ENCODE measurements at regions of chr6 and their contacts with region 1.

Region 1: DNA sequence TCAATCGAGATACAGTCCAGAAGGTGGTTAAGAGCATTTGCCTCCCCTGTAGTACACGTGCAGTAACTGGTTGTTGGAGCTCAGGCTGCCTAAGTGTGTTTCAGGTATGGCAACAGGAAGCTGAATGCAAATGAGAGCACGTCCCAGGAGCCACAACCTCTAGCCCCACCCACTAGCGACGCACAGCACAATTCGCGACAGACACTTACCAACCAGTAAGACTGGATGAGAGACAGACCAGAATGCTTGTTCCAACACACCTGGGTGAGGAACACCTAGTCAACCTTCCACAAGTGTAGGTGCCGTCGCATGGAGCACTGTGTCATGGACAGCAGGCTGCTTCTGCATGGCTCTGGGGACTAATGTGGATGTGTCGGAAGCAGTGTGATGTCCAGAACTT is 7.2 kb upstream of the SERPINB1 start:
- DNase-seq: peak in 7 of 9 donors; percentile 62 to 84 (median 75)
- ATAC-seq: peak; percentile 82
- H3K4me3 ChIP-seq: no peak overlapping the region
- H3K4me3 Mint-ChIP-seq: peak overlapping the region; percentile 30 to 83 (median 66)
- H3K27ac ChIP-seq: peak overlapping the region; percentile 63
- H3K27ac Mint-ChIP-seq: peak overlapping the region; percentile 85 to 95 (median 91)
- H3K4me1 ChIP-seq: peaks cover 16 to 30% of the 10 kb centered on the region in 2 donors
- H3K4me1 Mint-ChIP-seq: peaks cover 25 to 49% (median 48%) of the 10 kb centered on the region in 7 donors
- H3K27me3 ChIP-seq: no peaks in the 10 kb centered on the region
- H3K27me3 Mint-ChIP-seq: no peaks in the 10 kb centered on the region

Region 2: DNA sequence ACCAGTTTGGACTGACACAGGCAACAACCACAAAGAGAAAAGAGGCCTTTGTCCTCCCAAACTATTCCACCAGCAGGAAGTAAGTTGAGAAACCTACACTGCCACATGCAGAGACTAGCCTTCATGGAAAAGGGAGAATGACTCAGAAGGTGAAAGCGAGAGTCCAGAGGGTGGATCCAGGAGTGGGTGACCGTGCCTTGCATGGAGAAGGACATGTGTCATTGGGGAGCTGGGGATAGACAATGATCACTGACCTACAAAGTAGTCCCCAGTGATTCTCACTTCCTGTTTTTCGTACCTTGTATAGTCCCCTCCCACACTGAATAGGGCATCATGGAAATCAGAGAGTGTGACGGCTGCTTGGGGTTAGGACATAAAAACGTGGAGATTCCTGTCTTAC is 190.1 kb before region 1 on chr6:
- CTCF ChIA-PET with region 1: no interaction called
- POLR2A ChIA-PET with region 1: no interaction called
- intact Hi-C with region 1: no loop called
- DNase-seq: no peak
- ATAC-seq: peak; percentile 54
- H3K4me3 ChIP-seq: no peak overlapping the region
- H3K4me3 Mint-ChIP-seq: no peak overlapping the region
- H3K27ac ChIP-seq: no peak overlapping the region
- H3K27ac Mint-ChIP-seq: no peak overlapping the region
- H3K4me1 ChIP-seq: no peaks in the 10 kb centered on the region
- H3K4me1 Mint-ChIP-seq: peaks cover 0 to 4% (median 0%) of the 10 kb centered on the region in 7 donors
- H3K27me3 ChIP-seq: no peaks in the 10 kb centered on the region
- H3K27me3 Mint-ChIP-seq: peaks cover 0 to 11% (median 1%) of the 10 kb centered on the region in 5 donors

Region 3: GRCh38 chr6:2859185-2859700 is 10.4 kb after region 1 on chr6:
- CTCF ChIA-PET with region 1: interaction called, 35 read pairs
- POLR2A ChIA-PET with region 1: interaction called, 62 read pairs
- intact Hi-C with region 1: loop called (anchors 1 kb)
- DNase-seq: peak in 5 of 9 donors; percentile 78 to 84 (median 80)
- ATAC-seq: no peak
- H3K4me3 ChIP-seq: peak overlapping the region; percentile 56
- H3K4me3 Mint-ChIP-seq: peak overlapping the region; percentile 79 to 98 (median 88)
- H3K27ac ChIP-seq: peak overlapping the region; percentile 86
- H3K27ac Mint-ChIP-seq: peak overlapping the region; percentile 98 to 100 (median 99)
- H3K4me1 ChIP-seq: peaks cover 81 to 84% of the 10 kb centered on the region in 2 donors
- H3K4me1 Mint-ChIP-seq: peaks cover 66 to 95% (median 89%) of the 10 kb centered on the region in 7 donors
- H3K27me3 ChIP-seq: no peaks in the 10 kb centered on the region
- H3K27me3 Mint-ChIP-seq: no peaks in the 10 kb centered on the region

Region 4: DNA sequence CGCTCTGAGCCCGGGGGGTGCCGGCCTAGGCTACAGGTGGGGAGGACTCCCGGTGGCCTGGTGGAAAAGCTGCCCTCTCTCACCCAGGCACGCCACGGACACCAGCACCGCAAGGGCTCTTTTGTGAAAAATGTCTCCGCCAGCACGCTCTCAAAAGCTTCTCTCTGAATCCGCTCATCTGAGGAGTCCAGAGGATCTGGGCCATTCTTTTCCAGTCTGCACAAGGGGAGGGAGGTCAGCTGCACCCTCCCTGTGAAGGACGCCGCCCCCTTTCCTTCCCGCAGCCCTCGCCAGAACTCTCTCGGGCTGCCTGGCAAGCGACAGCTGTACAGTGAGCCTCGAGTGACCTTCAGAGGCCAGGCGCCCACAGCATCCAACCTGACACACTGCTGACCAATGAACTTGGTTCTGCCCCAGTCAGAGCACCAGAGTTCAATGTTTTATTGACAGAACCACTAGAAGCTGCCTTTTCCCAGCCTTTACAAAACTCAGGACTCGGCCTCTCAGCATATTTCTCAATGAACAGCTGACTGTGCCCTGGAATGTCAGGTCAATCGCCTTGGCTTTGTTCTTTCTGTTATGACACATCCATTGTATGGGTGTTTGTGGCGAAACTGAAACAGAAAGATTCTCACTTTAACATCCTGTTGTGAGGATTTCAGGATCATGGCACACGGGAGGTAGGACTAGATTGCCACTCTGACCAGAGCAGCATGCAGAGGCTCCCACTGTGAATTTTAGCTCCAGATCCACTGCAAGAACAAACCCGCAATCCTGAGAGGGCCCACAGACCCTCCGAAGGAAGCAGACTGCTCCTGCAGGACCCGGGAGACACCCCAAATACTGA is 27.6 kb after region 1 on chr6:
- CTCF ChIA-PET with region 1: interaction called, 57 read pairs
- POLR2A ChIA-PET with region 1: interaction called, 30 read pairs
- intact Hi-C with region 1: loop called (anchors 1 kb)
- DNase-seq: no peak
- ATAC-seq: peak; percentile 38
- H3K4me3 ChIP-seq: peak overlapping the region; percentile 50
- H3K4me3 Mint-ChIP-seq: peak overlapping the region; percentile 79 to 87 (median 84)
- H3K27ac ChIP-seq: peak overlapping the region; percentile 71
- H3K27ac Mint-ChIP-seq: peak overlapping the region; percentile 82 to 98 (median 91)
- H3K4me1 ChIP-seq: peaks cover 54 to 55% of the 10 kb centered on the region in 2 donors
- H3K4me1 Mint-ChIP-seq: peaks cover 63 to 83% (median 79%) of the 10 kb centered on the region in 7 donors
- H3K27me3 ChIP-seq: no peaks in the 10 kb centered on the region
- H3K27me3 Mint-ChIP-seq: no peaks in the 10 kb centered on the region

Region 5: DNA sequence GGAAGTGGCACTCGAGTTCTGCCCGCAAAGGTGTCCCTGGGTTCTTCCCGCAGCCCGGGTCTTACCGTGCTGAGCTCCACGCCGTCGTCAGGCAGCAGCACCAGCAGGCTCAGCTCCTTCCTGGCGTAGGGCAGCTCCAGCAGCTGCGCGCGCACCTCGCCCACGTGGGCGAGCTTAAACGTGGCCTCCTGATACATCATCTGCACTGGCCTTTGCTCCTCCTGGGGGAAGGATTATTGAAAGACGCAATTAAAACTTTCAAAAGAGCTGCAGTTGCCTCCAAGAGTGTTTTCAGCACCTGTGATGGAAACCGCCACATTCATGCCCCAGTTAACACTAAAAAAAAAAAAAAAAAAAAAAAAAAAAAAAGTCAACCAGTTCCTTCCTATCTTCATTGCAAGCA is 42.9 kb after region 1 on chr6:
- CTCF ChIA-PET with region 1: interaction called, 40 read pairs
- POLR2A ChIA-PET with region 1: interaction called, 18 read pairs
- intact Hi-C with region 1: loop called in 1 of 2 experiments (anchors 1 kb)
- DNase-seq: peak in 8 of 9 donors; percentile 31 to 93 (median 79)
- ATAC-seq: peak; percentile 88
- H3K4me3 ChIP-seq: peak overlapping the region; percentile 34
- H3K4me3 Mint-ChIP-seq: peak overlapping the region; percentile 58 to 81 (median 69)
- H3K27ac ChIP-seq: peak overlapping the region; percentile 69
- H3K27ac Mint-ChIP-seq: peak overlapping the region; percentile 13 to 96 (median 90)
- H3K4me1 ChIP-seq: peaks cover 0 to 18% of the 10 kb centered on the region in 2 donors
- H3K4me1 Mint-ChIP-seq: peaks cover 22 to 80% (median 68%) of the 10 kb centered on the region in 7 donors
- H3K27me3 ChIP-seq: no peaks in the 10 kb centered on the region
- H3K27me3 Mint-ChIP-seq: no peaks in the 10 kb centered on the region

Region 6: DNA sequence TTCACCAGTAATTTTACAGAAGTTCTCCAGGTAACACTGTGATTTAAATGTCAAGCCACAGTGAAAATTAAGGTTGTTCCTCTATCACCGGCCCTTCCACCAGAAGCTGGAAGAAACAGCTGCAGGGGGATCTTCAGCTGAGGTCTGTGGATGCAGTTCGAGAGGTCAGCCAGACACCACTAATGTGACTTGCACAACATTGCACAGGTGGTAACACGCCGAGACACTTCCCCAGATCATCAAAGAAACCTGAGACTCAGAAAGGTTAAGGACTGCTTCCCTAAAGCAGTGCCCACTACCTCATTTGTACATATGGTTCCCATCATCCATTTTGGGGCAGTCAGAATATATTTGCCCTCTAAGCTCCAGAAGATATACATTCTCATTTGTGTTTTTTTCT is 62.3 kb after region 1 on chr6:
- CTCF ChIA-PET with region 1: interaction called, 77 read pairs
- POLR2A ChIA-PET with region 1: interaction called, 71 read pairs
- intact Hi-C with region 1: loop called (anchors 1 kb)
- DNase-seq: no peak
- ATAC-seq: peak; percentile 35
- H3K4me3 ChIP-seq: no peak overlapping the region
- H3K4me3 Mint-ChIP-seq: no peak overlapping the region
- H3K27ac ChIP-seq: no peak overlapping the region
- H3K27ac Mint-ChIP-seq: peak overlapping the region in 2 of 9 donors; percentile 40 to 54
- H3K4me1 ChIP-seq: peaks cover 0 to 7% of the 10 kb centered on the region in 2 donors
- H3K4me1 Mint-ChIP-seq: peaks cover 26 to 53% (median 40%) of the 10 kb centered on the region in 7 donors
- H3K27me3 ChIP-seq: no peaks in the 10 kb centered on the region
- H3K27me3 Mint-ChIP-seq: peaks cover 0 to 1% (median 0%) of the 10 kb centered on the region in 5 donors

Region 7: DNA sequence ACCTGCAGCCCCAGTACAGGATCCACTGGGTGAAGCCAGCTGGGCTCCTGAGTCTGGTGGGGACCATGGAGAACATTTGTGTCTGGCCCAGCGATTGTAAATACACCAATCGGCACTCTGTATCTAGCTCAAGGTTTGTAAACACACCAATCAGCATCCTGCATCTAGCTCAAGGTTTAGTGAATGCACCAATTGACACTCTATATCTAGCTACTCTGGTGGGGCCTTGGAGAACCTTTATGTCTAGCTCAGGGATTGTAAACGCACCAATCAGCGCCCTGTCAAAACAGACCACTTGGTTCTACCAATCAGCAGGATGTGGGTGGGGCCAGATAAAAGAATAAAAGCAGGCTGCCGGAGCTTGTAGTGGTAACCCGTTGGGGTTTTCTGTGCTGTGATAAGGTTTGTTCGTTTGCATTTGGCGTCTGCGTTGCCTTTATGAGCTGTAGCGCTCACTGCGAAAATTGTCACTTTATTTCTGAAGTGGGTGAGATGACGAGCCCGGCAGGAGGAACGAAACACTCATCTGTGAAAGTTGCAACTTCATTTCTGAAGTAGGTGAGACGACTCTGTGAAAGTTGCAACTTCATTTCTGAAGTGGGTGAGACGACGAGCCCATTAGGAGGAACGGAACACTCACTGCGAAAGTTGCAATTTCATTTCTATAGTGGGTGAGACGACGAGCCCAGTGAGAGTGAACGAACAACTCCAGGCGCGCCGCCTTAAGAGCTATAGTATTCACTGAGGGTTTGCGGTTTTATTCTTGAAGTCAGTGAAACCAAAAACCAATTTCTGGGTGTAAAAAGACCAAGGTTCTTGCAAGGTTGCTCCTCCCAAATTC is 91.4 kb after region 1 on chr6:
- CTCF ChIA-PET with region 1: interaction called, 35 read pairs
- POLR2A ChIA-PET with region 1: interaction called, 90 read pairs
- intact Hi-C with region 1: loop called in 1 of 2 experiments (anchors 2 kb)
- DNase-seq: peak in 8 of 9 donors; percentile 70 to 90 (median 82)
- ATAC-seq: peak; percentile 81
- H3K4me3 ChIP-seq: peak overlapping the region; percentile 72
- H3K4me3 Mint-ChIP-seq: peak overlapping the region; percentile 81 to 94 (median 88)
- H3K27ac ChIP-seq: peak overlapping the region; percentile 81
- H3K27ac Mint-ChIP-seq: peak overlapping the region; percentile 93 to 100 (median 97)
- H3K4me1 ChIP-seq: peaks cover 27 to 76% of the 10 kb centered on the region in 2 donors
- H3K4me1 Mint-ChIP-seq: peaks cover 33 to 88% (median 79%) of the 10 kb centered on the region in 7 donors
- H3K27me3 ChIP-seq: no peaks in the 10 kb centered on the region
- H3K27me3 Mint-ChIP-seq: peaks cover 0 to 22% (median 0%) of the 10 kb centered on the region in 5 donors

Region 8: GRCh38 chr6:3061501-3061941 is 212.7 kb after region 1 on chr6:
- CTCF ChIA-PET with region 1: interaction called, 3 read pairs
- POLR2A ChIA-PET with region 1: no interaction called
- intact Hi-C with region 1: loop called in 1 of 2 experiments (anchors 5 kb)
- DNase-seq: no peak
- ATAC-seq: no peak
- H3K4me3 ChIP-seq: no peak overlapping the region
- H3K4me3 Mint-ChIP-seq: peak overlapping the region in 1 of 10 donors; percentile 19
- H3K27ac ChIP-seq: no peak overlapping the region
- H3K27ac Mint-ChIP-seq: no peak overlapping the region
- H3K4me1 ChIP-seq: no peaks in the 10 kb centered on the region
- H3K4me1 Mint-ChIP-seq: peaks cover 18 to 41% (median 34%) of the 10 kb centered on the region in 7 donors
- H3K27me3 ChIP-seq: no peaks in the 10 kb centered on the region
- H3K27me3 Mint-ChIP-seq: peaks cover 0 to 3% (median 0%) of the 10 kb centered on the region in 5 donors

Measured in naive thymus-derived CD4-positive, alpha-beta T cell (primary cell).